ENCODE measurements at regions of chr16 and their contacts with region 1.

Region 1: DNA sequence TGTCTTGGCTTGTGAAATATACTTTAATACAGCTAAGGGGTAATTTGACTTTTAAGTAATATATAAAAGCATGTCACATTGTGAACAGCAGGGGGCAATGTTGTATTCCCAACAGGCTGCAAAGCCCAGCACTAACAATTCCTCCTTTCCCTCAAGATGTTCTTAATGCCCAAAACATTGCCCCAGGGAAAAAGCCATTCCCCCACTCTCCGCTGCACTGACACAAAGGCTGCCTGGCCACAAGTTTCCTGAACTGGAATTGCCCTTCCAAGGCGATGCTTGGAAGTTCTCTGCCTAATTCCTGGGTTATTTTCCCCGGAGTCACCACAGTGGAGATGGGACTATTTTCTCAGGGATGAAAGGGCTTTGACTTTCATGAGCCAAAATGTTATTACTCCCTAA is 27.2 kb downstream of the CLEC16A start:
- DNase-seq: peak in 2 of 10 donors; percentile 47 to 63
- H3K4me3 ChIP-seq: no peak overlapping the region
- H3K27ac ChIP-seq: peak overlapping the region in 4 of 59 donors; percentile 8 to 19 (median 14)
- H3K27me3 ChIP-seq: no peaks in the 10 kb centered on the region
- CTCF ChIP-seq: peak; percentile 68 to 95 (median 84)

Region 2: GRCh38 chr16:10791048-10791447 is 180.5 kb before region 1 on chr16:
- intact Hi-C with region 1: no loop called
- DNase-seq: no peak
- H3K4me3 ChIP-seq: no peak overlapping the region
- H3K27ac ChIP-seq: no peak overlapping the region
- H3K27me3 ChIP-seq: no peaks in the 10 kb centered on the region
- CTCF ChIP-seq: no peak

Region 3: GRCh38 chr16:10944249-10945064 is 27.1 kb before region 1 on chr16 and contains the start of gene CLEC16A:
- intact Hi-C with region 1: no loop called
- DNase-seq: peak; percentile 97 to 99 (median 98)
- H3K4me3 ChIP-seq: peak within 1 kb of the TSS; percentile 63 to 100 (median 91)
- H3K27ac ChIP-seq: peak within 1 kb of the TSS in 49 of 59 donors; percentile 18 to 90 (median 70)
- H3K27me3 ChIP-seq: no peaks in the 10 kb centered on the region
- CTCF ChIP-seq: peak in 54 of 56 donors; percentile 15 to 72 (median 51)
- total RNA-seq, gene CLEC16A: 40.5 to 75.1 (median 58.1) TPM

Region 4: GRCh38 chr16:10957771-10958486 is 13.6 kb before region 1 on chr16:
- intact Hi-C with region 1: no loop called
- DNase-seq: no peak
- H3K4me3 ChIP-seq: no peak overlapping the region
- H3K27ac ChIP-seq: peak overlapping the region in 9 of 59 donors; percentile 1 to 51 (median 20)
- H3K27me3 ChIP-seq: no peaks in the 10 kb centered on the region
- CTCF ChIP-seq: no peak

Region 5: GRCh38 chr16:11255737-11256660 is 284.4 kb after region 1 on chr16 and contains the start of gene SOCS1:
- intact Hi-C with region 1: loop called (anchors 2 kb)
- DNase-seq: peak; percentile 63 to 84 (median 76)
- H3K4me3 ChIP-seq: peak within 1 kb of the TSS; percentile 59 to 96 (median 82)
- H3K27ac ChIP-seq: peak within 1 kb of the TSS in 57 of 59 donors; percentile 10 to 97 (median 91)
- H3K27me3 ChIP-seq: no peaks in the 10 kb centered on the region
- CTCF ChIP-seq: peak; percentile 40 to 91 (median 72)
- total RNA-seq, gene SOCS1: 0.28 to 3.7 (median 0.76) TPM in 88 of 120 experiments, not detected in the others

Region 6: DNA sequence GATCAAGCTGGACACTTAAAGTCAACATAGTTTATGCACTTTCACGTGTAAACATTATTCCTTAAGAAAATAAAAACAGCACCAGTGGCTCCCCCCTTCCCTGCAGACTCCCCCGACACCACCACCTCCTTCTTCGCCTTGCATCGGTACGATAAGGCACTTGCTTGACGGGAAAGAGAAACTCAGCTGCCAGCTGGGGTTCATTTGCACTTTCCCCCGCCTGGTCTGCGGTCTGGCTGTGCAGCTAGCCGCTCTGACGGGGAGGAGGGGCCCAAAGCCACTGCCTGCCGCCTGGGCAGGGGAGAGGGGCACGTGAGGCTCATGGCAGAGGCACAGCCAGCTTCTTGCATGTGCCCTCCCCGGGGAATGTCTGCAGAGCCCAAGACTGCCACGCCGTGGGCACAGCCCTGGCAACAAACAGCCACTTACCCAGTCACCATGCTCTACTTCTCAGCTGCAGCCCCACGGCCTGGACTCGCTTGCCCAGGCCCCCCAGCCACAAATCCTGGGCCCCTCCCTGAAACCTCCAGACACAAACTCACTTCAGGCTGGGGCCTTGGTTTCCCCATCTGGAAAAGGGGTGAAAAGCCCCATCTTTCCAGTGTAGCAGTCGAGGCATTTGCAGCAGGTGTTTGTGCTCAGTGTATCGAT is 326.1 kb after region 1 on chr16:
- intact Hi-C with region 1: loop called in 1 of 2 experiments (anchors 2 kb)
- DNase-seq: peak; percentile 28 to 83 (median 78)
- H3K4me3 ChIP-seq: peak overlapping the region in 56 of 59 donors; percentile 3 to 58 (median 40)
- H3K27ac ChIP-seq: peak overlapping the region in 5 of 59 donors; percentile 8 to 41 (median 18)
- H3K27me3 ChIP-seq: no peaks in the 10 kb centered on the region
- CTCF ChIP-seq: peak in 50 of 56 donors; percentile 9 to 67 (median 40)

Region 7: GRCh38 chr16:11356573-11357331 is 385.2 kb after region 1 on chr16:
- intact Hi-C with region 1: loop called (anchors 2 to 5 kb)
- DNase-seq: peak in 9 of 10 donors; percentile 13 to 59 (median 42)
- H3K4me3 ChIP-seq: no peak overlapping the region
- H3K27ac ChIP-seq: no peak overlapping the region
- H3K27me3 ChIP-seq: peaks cover 0 to 5% (median 0%) of the 10 kb centered on the region in 45 donors
- CTCF ChIP-seq: peak in 53 of 56 donors; percentile 22 to 73 (median 54)

Measured in dorsolateral prefrontal cortex (tissue), 120 donors.